Mammary epithelial cell (primary cell): ENCODE measurements at regions of chr1 and their contacts with region 1.

Region 1: GRCh38 chr1:72623299-72623708 is 341.0 kb upstream of the NEGR1 start:
- DNase-seq: peak; percentile 35
- H3K4me3 ChIP-seq: no peak overlapping the region
- H3K27ac ChIP-seq: no peak overlapping the region
- H3K4me1 ChIP-seq: no peaks in the 10 kb centered on the region
- H3K27me3 ChIP-seq: no peaks in the 10 kb centered on the region
- CTCF ChIP-seq: peak; percentile 61 to 73

Region 2: GRCh38 chr1:73635021-73635420 is 1011.7 kb after region 1 on chr1:
- CTCF ChIA-PET with region 1: no interaction called
- dilution Hi-C with region 1: no loop called
- in situ Hi-C with region 1: no loop called
- intact Hi-C with region 1: loop called (anchors 10 kb)
- DNase-seq: no peak
- H3K4me3 ChIP-seq: no peak overlapping the region
- H3K27ac ChIP-seq: no peak overlapping the region
- H3K4me1 ChIP-seq: no peaks in the 10 kb centered on the region
- H3K27me3 ChIP-seq: no peaks in the 10 kb centered on the region
- CTCF ChIP-seq: peak in 1 of 2 donors; percentile 37

Region 3: GRCh38 chr1:73789965-73790364 is 1166.7 kb after region 1 on chr1:
- CTCF ChIA-PET with region 1: no interaction called
- dilution Hi-C with region 1: no loop called
- in situ Hi-C with region 1: no loop called
- intact Hi-C with region 1: no loop called
- DNase-seq: peak; percentile 45
- H3K4me3 ChIP-seq: no peak overlapping the region
- H3K27ac ChIP-seq: no peak overlapping the region
- H3K4me1 ChIP-seq: peaks cover 5% of the 10 kb centered on the region
- H3K27me3 ChIP-seq: no peaks in the 10 kb centered on the region
- CTCF ChIP-seq: no peak